ENCODE measurements at regions of chr1 and their contacts with region 1.

Region 1: GRCh38 chr1:210584439-210585113 is 255.9 kb downstream of the HHAT start:
- DNase-seq: peak; percentile 64 to 79
- H3K4me3 ChIP-seq: no peak overlapping the region
- H3K27ac ChIP-seq: no peak overlapping the region
- H3K4me1 ChIP-seq: no peaks in the 10 kb centered on the region
- H3K27me3 ChIP-seq: no peaks in the 10 kb centered on the region
- CTCF ChIP-seq: peak; percentile 88

Region 2: DNA sequence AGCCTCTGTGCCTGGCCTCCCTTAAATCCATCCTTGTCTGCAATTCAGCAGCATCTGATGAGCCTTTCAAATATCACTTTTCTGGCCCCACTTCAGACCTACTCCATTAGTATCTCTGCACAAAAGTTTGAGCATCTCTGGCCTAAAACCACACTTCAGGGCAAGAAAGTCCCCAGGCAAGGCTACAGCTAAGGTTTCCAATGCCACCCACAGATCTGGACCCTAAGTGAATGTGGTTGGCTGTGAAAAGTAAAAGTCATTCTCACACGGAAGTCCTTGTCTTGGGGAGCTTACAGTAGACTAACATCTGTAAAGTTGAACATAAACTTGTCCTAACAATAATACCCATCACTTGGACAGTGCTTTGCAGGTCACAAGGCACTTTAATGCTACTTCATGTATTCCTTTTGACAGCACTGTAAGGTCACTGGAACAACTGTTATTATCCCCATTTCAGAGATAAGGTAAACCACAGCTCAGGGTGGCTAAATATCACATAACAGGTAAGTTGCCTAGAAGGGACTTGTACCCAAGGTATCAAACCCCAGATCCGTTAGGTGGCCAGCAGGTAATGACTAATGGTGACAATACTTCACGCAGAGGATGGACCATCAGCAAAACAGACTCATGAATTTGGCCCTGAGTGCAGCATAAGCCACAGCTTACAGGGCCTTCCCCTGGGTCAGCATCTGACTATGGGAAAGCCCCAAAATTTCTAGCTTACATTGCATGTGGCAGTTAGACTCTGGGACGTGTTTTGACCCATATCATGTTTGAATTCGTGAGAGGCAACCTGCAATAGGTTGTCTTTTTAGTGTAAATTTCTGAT is 100.1 kb after region 1 on chr1:
- CTCF ChIA-PET with region 1: no interaction called
- POLR2A ChIA-PET with region 1: no interaction called
- intact Hi-C with region 1: loop called (anchors 5 kb)
- DNase-seq: no peak
- H3K4me3 ChIP-seq: no peak overlapping the region
- H3K27ac ChIP-seq: no peak overlapping the region
- H3K4me1 ChIP-seq: no peaks in the 10 kb centered on the region
- H3K27me3 ChIP-seq: no peaks in the 10 kb centered on the region
- CTCF ChIP-seq: no peak

Region 3: DNA sequence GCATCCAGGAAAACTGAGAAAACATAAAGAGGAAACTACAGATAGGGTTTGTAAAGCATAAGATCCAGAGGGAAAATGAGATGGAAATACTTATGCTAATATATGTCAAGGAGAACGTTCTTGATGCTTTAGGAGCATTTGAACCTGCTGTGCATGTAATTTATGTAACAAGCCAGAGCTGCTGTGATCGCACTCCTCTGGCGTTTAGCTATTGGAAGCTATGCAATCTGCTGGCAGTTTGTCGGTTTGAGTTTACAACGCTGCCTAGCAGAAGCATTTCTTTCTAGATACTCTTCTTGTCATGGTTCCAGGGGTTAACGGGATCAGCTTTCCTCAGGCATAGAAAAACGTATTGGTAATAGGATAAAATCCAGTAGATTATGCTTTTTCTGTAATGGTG is 366.7 kb after region 1 on chr1:
- CTCF ChIA-PET with region 1: interaction called, 3 read pairs
- POLR2A ChIA-PET with region 1: no interaction called
- intact Hi-C with region 1: loop called (anchors 1 kb)
- DNase-seq: no peak
- H3K4me3 ChIP-seq: no peak overlapping the region
- H3K27ac ChIP-seq: no peak overlapping the region
- H3K4me1 ChIP-seq: no peaks in the 10 kb centered on the region
- H3K27me3 ChIP-seq: peaks cover 4% of the 10 kb centered on the region; the same call in 1 of the 2 replicates
- CTCF ChIP-seq: no peak

Measured in PC-9 (cell line).